AG04450 (cell line): ENCODE measurements at regions of chr17 and their contacts with region 1.

Region 1: GRCh38 chr17:43940630-43941029 is 1.6 kb downstream of the PPY start:
- DNase-seq: no peak
- H3K4me3 ChIP-seq: no peak overlapping the region
- H3K27ac ChIP-seq: no peak overlapping the region
- H3K27me3 ChIP-seq: peaks cover 34% of the 10 kb centered on the region
- CTCF ChIP-seq: peak; percentile 77

Region 2: DNA sequence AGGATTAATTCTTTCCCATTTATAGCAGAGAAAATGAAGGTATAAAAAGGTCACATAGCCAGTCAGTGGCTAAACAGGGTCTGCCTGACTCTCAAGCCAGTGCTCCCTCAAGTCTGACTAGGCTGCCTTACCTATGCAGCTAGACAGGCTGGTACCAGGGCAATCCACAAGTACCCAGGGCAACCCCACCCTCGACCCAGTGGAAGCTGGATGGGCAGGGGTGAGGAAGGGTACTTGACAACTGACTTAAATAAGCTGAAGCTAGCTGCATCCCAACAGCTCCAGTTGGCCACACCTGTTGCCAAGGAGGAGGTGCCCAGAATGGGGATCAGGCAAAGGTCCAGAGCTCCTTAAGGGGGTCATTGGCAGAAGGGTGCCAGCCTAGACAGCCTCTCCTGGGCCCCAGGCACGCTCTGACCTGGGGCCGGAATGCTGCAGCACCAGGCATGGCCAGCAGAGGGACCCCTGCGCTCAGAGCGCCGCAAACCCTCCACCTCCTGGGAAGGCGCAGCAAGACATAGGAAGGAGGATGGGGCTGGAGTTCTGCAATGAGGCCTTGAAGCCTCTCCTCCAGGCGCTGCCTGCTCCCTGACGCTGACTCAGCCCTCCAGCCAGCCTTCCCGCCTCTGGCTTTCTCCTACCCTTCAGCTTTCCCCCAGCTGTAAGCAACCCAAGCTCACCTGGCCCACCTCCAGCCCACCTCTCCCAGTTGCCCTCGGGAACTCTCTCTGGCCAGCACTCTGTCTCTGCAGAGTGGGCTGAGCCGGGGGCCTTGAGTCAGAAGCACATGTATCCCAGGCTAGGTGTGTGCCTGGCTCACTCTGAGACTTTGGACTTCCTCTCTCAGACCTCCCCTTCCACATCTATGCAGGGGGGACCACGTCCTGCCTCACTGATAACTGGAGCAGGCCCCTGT is 62.1 kb before region 1 on chr17:
- CTCF ChIA-PET with region 1: interaction called, 16 read pairs
- POLR2A ChIA-PET with region 1: no interaction called
- DNase-seq: peak; percentile 74
- H3K4me3 ChIP-seq: no peak overlapping the region
- H3K27ac ChIP-seq: no peak overlapping the region
- H3K27me3 ChIP-seq: peaks cover 18% of the 10 kb centered on the region
- CTCF ChIP-seq: peak; percentile 97

Region 3: DNA sequence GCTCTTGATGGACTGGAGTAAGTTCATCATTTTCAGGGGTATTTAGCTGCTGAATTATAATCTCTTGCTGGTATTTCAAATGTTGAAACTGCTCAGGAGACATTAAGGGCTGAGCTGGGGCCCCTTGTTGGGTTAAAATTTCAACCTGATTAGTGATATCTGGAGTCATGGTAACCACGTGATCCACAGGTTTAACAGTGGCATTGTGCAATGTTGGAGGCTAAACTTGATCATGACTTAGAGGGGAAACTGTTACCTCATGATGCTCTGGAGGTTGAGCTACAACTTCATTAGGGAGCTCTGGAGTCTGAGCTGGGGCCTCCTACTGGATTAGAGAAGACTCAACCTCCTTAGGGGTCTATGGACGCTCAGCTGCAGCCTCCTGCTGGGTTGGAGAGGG is 16.1 kb before region 1 on chr17:
- CTCF ChIA-PET with region 1: interaction called, 25 read pairs
- POLR2A ChIA-PET with region 1: no interaction called
- DNase-seq: no peak
- H3K4me3 ChIP-seq: no peak overlapping the region
- H3K27ac ChIP-seq: no peak overlapping the region
- H3K27me3 ChIP-seq: peaks cover 65% of the 10 kb centered on the region
- CTCF ChIP-seq: no peak

Region 4: GRCh38 chr17:43958953-43959352 is 18.3 kb after region 1 on chr17:
- CTCF ChIA-PET with region 1: interaction called, 35 read pairs
- POLR2A ChIA-PET with region 1: no interaction called
- DNase-seq: no peak
- H3K4me3 ChIP-seq: no peak overlapping the region
- H3K27ac ChIP-seq: no peak overlapping the region
- H3K27me3 ChIP-seq: peaks cover 40% of the 10 kb centered on the region
- CTCF ChIP-seq: no peak

Region 5: GRCh38 chr17:44110823-44111633 is 170.4 kb after region 1 on chr17:
- CTCF ChIA-PET with region 1: interaction called, 17 read pairs
- POLR2A ChIA-PET with region 1: no interaction called
- DNase-seq: no peak
- H3K4me3 ChIP-seq: peak overlapping the region; percentile 57
- H3K27ac ChIP-seq: peak overlapping the region; percentile 47
- H3K27me3 ChIP-seq: no peaks in the 10 kb centered on the region
- CTCF ChIP-seq: no peak; the same call in 1 of the 2 replicates